MCF 10A (cell line): ENCODE measurements at regions of chr22 and their contacts with region 1.

Region 1: GRCh38 chr22:37043828-37044538 is 7.6 kb upstream of the KCTD17 start:
- DNase-seq: peak; percentile 79
- H3K4me3 Mint-ChIP-seq: no peak overlapping the region
- H3K27ac Mint-ChIP-seq: no peak overlapping the region
- H3K4me1 Mint-ChIP-seq: peaks cover 7% of the 10 kb centered on the region
- H3K27me3 Mint-ChIP-seq: no peaks in the 10 kb centered on the region
- CTCF ChIP-seq: peak; percentile 75

Region 2: GRCh38 chr22:36762687-36763260 is 281.2 kb before region 1 on chr22:
- CTCF ChIA-PET with region 1: no interaction called
- POLR2A ChIA-PET with region 1: no interaction called
- intact Hi-C with region 1: no loop called
- DNase-seq: peak; percentile 54
- H3K4me3 Mint-ChIP-seq: peak overlapping the region; percentile 12
- H3K27ac Mint-ChIP-seq: peak overlapping the region; percentile 52
- H3K4me1 Mint-ChIP-seq: peaks cover 29% of the 10 kb centered on the region
- H3K27me3 Mint-ChIP-seq: no peaks in the 10 kb centered on the region
- CTCF ChIP-seq: no peak

Region 3: GRCh38 chr22:36781656-36782627 is 262.0 kb before region 1 on chr22:
- CTCF ChIA-PET with region 1: interaction called, 4 read pairs
- POLR2A ChIA-PET with region 1: no interaction called
- intact Hi-C with region 1: loop called (anchors 1 kb)
- DNase-seq: peak; percentile 86
- H3K4me3 Mint-ChIP-seq: no peak overlapping the region
- H3K27ac Mint-ChIP-seq: no peak overlapping the region
- H3K4me1 Mint-ChIP-seq: peaks cover 8% of the 10 kb centered on the region
- H3K27me3 Mint-ChIP-seq: peaks cover 32% of the 10 kb centered on the region
- CTCF ChIP-seq: peak; percentile 84

Region 4: DNA sequence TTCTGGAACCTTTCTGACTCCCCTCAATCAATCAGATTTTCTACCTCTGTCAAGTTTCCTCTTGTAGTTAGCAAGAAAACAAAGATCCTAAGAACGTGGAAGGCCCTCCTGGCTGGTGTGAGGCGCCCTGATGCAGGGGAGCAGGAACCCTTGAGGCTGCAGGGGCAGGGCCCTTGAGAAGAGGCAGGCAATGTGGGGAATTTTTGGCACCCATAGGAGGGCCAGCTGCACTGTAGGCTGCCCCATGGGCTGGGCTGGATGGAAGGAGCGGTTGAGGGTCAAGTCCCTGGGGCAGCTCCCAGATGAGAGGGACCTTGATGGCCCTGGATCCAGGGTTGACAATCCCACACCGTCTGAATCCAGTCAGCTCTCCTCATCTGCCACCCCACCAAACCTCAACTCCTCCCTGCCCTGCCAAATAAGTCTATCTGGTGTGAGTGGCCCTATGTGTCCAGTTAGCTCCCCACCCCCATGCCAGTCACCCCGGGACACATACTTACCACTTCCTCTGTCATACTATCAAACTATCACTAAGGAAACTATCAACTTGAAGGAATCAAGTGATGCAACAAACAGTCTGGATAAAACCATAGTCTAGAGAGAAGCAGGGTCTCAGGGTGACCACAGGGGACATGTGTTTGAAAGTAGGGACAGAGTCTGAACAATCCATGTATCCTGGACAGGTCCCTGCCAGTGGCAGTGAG is 143.9 kb before region 1 on chr22:
- CTCF ChIA-PET with region 1: no interaction called
- POLR2A ChIA-PET with region 1: no interaction called
- intact Hi-C with region 1: no loop called
- DNase-seq: no peak
- H3K4me3 Mint-ChIP-seq: no peak overlapping the region
- H3K27ac Mint-ChIP-seq: no peak overlapping the region
- H3K4me1 Mint-ChIP-seq: no peaks in the 10 kb centered on the region
- H3K27me3 Mint-ChIP-seq: peaks cover 75% of the 10 kb centered on the region
- CTCF ChIP-seq: no peak

Region 5: DNA sequence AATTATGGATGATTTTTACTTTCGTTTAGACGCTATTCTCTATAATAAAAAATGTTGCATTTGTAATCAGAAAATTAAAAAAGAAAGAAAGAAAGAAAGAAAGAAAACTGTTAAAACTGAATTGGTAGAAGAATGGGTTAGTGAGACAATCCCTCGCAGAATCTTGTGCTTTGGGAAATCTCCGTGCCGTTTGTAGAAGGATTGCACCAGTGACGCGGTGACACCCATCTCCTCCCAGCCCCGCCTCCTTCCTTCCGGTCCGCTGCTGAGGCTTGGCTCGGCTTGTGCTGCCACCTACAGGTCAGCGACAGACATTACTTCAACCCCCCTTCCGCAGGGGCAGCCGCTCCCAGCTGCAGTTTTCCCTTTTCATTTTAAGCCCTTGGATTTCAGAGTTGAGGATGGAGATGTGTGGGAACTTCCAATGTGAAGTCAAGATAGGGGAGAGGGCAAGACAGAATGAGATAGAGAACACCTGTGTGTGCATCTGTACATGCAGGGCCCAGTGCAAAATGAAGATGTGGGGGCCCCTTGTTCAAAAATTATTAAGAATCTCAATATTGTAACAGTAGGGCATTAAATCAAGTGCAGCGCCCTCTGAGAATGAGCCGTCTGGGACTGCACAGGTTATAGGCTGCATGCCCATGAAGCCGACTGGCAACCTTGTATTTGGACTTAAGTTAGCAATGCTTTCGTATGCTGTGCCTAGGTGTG is 65.9 kb before region 1 on chr22:
- CTCF ChIA-PET with region 1: interaction called, 10 read pairs
- POLR2A ChIA-PET with region 1: interaction called, 3 read pairs
- intact Hi-C with region 1: loop called (anchors 2 kb)
- DNase-seq: peak; percentile 87
- H3K4me3 Mint-ChIP-seq: peak overlapping the region; percentile 67
- H3K27ac Mint-ChIP-seq: peak overlapping the region; percentile 73
- H3K4me1 Mint-ChIP-seq: peaks cover 10% of the 10 kb centered on the region
- H3K27me3 Mint-ChIP-seq: no peaks in the 10 kb centered on the region
- CTCF ChIP-seq: peak; percentile 84

Region 6: DNA sequence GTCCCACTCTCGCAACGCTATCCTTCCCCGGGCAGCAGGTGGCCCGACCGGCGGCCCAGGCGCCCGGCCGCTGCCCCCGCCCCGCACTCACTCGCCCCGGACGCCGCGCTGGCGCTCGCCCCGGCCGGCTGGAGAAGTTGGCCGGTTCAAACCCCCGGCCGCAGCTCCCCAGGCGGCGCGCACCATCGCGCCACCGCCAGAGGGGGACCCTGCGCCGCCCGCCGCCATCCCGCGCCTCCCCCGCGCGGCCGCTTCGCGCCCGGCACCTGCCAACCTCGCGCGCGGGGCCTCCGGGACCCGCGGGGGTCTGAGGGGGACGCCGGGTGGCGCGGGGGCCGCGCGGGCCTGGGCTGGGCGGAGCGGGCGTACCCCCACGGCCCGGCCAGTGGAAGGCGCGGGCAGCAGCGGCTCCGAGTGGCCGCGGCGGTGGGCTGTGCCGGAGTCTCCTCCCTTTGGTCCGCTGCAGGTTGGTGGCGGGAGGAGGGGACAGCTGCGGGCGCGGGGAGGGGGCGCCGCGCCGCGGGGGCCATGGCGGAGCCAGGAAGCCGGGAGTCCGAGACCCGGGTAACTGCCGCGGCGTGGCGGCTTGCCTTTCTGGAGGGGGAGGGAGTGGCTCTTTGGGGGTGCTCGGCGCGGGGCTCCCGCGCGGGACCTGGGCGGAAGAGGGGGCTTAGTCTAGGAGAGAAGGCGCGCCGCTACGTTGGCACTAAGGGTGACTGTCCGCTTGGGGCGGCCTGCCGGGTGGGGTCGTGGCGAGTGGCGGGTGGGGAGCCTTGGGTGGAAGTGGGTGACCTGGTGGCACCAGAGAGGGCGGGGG is 24.5 kb before region 1 on chr22 and contains the starts of genes MPST and TST:
- CTCF ChIA-PET with region 1: interaction called, 15 read pairs
- POLR2A ChIA-PET with region 1: interaction called, 8 read pairs
- intact Hi-C with region 1: no loop called
- DNase-seq: peak; percentile 62
- H3K4me3 Mint-ChIP-seq: peak within 1 kb of the TSS; percentile 91
- H3K27ac Mint-ChIP-seq: peak within 1 kb of the TSS; percentile 88
- H3K4me1 Mint-ChIP-seq: peaks cover 22% of the 10 kb centered on the region
- H3K27me3 Mint-ChIP-seq: no peaks in the 10 kb centered on the region
- CTCF ChIP-seq: no peak
- total RNA-seq, gene MPST: 40.7 and 51.2 TPM in 2 replicates
- total RNA-seq, gene TST: 16.2 and 16.4 TPM in 2 replicates

Region 7: DNA sequence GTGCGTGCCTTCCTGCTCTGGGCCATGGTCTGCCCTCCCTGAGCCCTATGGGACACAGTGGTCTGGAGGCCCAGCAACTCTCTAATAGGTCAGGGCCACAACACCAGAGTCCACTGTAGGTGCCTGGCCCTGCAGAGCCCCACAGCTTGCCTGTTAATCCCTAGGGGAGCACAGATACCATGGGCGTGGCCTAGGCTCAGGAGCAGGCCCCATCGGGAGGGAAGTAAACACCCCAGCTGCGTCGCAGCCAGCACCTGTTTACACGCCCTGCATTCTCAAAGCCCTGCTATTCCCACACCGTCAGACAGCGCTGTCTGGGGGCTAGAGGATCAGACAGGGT is 10.0 kb after region 1 on chr22:
- CTCF ChIA-PET with region 1: interaction called, 17 read pairs
- POLR2A ChIA-PET with region 1: no interaction called
- intact Hi-C with region 1: no loop called
- DNase-seq: no peak
- H3K4me3 Mint-ChIP-seq: no peak overlapping the region
- H3K27ac Mint-ChIP-seq: no peak overlapping the region
- H3K4me1 Mint-ChIP-seq: peaks cover 6% of the 10 kb centered on the region
- H3K27me3 Mint-ChIP-seq: no peaks in the 10 kb centered on the region
- CTCF ChIP-seq: no peak